GM12878 (cell line): ENCODE measurements at regions of chr9 and their contacts with region 1.

Region 1: DNA sequence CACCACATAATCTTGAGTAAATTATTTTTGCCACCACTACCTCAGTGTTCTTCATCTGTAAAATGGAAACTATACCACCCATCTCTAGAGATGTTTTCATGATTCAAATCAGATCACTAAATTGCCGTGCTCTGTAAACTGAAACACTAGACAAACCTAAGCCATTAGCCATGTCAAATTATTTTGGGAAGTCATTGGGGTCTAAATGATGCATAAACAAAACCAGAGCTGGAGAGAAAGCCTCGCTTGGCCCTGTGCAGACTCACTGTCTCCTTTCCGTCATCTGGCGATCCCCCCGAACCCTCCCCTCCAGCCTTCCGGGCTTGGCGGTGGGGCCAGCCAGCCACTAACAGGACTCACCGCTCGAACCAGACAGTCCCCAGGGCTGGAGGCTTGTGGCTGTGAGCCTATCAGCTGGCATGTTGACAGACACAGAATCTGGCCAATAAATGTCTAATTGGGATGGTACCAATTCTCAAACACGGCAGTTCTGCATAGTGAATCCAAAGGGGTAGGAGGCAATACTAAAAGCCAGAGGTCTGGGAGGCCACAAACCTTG is 256.5 kb downstream of the SEC61B start:
- DNase-seq: no peak
- ATAC-seq: no peak
- H3K4me3 ChIP-seq: no peak overlapping the region
- H3K27ac ChIP-seq: no peak overlapping the region
- H3K4me1 ChIP-seq: no peaks in the 10 kb centered on the region
- H3K27me3 ChIP-seq: no peaks in the 10 kb centered on the region
- CTCF ChIP-seq: no peak
- EP300 ChIP-seq: no peak
- POLR2A ChIP-seq: no peak
- RAD21 ChIP-seq: no peak

Region 2: GRCh38 chr9:99488734-99489413 is 10.3 kb after region 1 on chr9:
- CTCF ChIA-PET with region 1: interaction called, 3 read pairs
- POLR2A ChIA-PET with region 1: no interaction called
- RAD21 ChIA-PET with region 1: no interaction called
- SMC1A ChIA-PET with region 1: interaction called, 10 read pairs
- in situ Hi-C with region 1: no loop called
- intact Hi-C with region 1: no loop called
- DNase-seq: no peak
- ATAC-seq: no peak
- H3K4me3 ChIP-seq: no peak overlapping the region
- H3K27ac ChIP-seq: no peak overlapping the region
- H3K4me1 ChIP-seq: peaks cover 5% of the 10 kb centered on the region
- H3K27me3 ChIP-seq: no peaks in the 10 kb centered on the region
- CTCF ChIP-seq: no peak
- EP300 ChIP-seq: no peak
- POLR2A ChIP-seq: no peak
- RAD21 ChIP-seq: no peak

Region 3: DNA sequence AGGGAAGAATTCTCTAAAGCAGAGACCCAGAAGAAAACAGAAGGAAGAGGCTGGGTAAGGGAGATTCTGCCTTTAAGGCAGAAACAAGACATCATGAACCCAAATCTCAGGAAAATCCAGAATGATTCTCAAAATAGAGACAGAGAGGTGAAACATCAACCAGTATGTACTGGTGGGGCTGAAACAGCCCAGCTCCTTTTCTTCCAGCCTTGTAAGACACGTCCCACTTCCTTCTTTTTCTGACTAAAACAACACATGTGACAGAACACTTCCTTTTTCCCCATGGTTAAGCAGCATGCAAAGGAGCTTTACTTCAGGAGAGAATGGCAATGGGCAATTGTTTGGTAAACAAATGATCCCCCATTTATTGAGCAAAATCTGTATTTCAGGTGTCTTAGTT is 112.3 kb after region 1 on chr9:
- CTCF ChIA-PET with region 1: no interaction called
- POLR2A ChIA-PET with region 1: no interaction called
- RAD21 ChIA-PET with region 1: no interaction called
- SMC1A ChIA-PET with region 1: no interaction called
- in situ Hi-C with region 1: no loop called
- intact Hi-C with region 1: no loop called
- DNase-seq: no peak
- ATAC-seq: peak; percentile 22
- H3K4me3 ChIP-seq: no peak overlapping the region
- H3K27ac ChIP-seq: no peak overlapping the region
- H3K4me1 ChIP-seq: peaks cover 13% of the 10 kb centered on the region; the same call in 1 of the 2 replicates
- H3K27me3 ChIP-seq: no peaks in the 10 kb centered on the region
- CTCF ChIP-seq: no peak
- EP300 ChIP-seq: peak in 1 of 2 experiments; percentile 25; a peak in 1 of 4 replicates
- POLR2A ChIP-seq: no peak
- RAD21 ChIP-seq: no peak